Heart right ventricle (tissue), 16 donors: ENCODE measurements at regions of chr3 and their contacts with region 1.

Region 1: GRCh38 chr3:185558395-185558794 is 6.0 kb upstream of the LIPH start:
- DNase-seq: no peak
- ATAC-seq: no peak
- H3K4me3 ChIP-seq: no peak overlapping the region
- H3K27ac ChIP-seq: no peak overlapping the region
- H3K4me1 ChIP-seq: peaks cover 0 to 11% (median 0%) of the 10 kb centered on the region in 9 donors
- H3K27me3 ChIP-seq: peaks cover 0 to 29% (median 12%) of the 10 kb centered on the region in 7 donors
- CTCF ChIP-seq: no peak

Region 2: DNA sequence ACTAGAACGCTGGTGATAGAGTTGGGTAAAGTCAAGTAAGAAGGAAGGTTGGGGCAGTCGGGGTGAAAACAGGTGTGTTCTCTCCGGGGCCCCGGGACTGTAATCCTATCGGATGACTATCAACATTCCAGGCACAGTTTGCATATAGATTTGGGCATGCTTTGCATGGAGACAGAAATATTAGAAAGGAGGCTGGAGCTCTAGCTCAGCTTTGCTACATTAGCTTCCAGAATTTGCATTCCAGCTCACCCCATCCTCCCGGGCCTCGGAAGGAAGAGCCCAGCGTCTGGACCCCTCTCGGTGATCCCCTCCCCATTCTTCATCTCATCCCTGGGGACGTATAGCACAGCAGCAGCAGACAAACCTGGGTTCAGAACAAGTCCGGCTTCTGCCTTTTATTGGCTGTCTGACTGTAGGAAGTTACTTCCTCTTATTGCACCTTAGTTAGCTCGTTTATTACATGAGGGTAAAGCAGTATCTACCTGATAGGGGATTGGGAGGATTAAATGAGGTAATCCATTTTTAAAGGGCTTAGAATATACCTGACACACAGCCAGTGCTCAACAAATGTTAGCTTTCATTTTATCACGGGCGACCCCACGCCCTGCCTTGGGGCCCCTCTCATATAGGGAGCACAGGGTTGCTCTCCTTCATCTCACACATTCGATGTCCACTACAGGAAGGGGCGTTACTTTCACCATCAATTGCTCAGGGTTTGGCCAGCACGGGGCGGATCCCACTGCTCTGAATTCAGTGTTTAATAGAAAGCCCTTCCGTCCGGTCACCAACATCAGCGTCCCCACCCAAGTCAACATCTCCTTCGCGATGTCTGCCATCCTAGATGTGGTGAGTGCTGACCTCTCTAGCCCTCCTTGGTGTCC is 1458.3 kb before region 1 on chr3:
- intact Hi-C with region 1: no loop called
- DNase-seq: no peak
- ATAC-seq: no peak
- H3K4me3 ChIP-seq: no peak overlapping the region
- H3K27ac ChIP-seq: no peak overlapping the region
- H3K4me1 ChIP-seq: no peaks in the 10 kb centered on the region
- H3K27me3 ChIP-seq: peaks cover 0 to 5% (median 0%) of the 10 kb centered on the region in 7 donors
- CTCF ChIP-seq: no peak

Region 3: DNA sequence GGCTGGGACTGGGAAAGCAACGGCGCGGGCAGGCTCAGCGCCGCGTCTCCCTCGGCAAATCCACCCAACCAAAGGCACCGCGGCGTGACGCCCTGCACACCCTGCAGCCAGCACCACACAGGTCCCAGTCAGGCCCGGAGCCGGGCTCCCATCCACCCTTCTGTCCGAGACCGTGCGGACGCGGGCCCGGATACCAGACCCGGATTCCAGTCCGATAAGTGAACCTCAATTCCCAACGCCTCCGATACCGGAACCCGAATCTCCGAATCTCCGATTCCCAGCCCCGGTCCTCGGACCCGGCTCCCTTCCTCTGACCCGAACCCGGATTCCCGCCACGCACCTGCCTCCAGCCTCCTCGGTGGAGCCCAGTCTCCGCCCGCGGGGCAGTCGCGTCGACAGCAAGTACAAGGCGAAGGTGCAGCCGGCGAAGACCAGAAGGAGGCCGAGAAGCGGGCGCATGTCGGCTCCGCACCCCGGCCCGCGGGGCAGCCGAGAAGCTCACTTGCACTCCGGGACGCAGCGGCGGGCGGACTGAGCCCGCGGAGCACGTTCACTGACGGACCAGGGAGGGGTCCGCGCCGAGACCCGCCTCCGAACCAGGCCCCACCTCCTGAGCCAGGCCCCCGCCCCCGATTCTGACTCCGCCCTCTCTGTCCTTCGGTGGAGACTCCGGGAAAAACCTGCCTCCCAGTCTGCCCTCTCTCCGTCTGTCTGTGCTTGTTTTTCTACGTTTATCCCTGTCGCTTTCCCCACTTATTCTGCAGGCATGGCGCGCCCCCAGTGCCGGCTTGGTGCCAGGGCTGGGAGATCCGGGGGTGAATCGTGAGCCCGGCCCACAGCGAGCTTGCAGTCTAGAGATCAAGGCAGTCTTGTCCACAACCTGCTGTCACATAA is 59.6 kb before region 1 on chr3 and contains the start of gene TMEM41A:
- intact Hi-C with region 1: loop called in 4 of 10 experiments (anchors 5 to 10 kb)
- DNase-seq: peak; percentile 95
- ATAC-seq: peak; percentile 98 to 99 (median 99)
- H3K4me3 ChIP-seq: peak within 1 kb of the TSS; percentile 62 to 99 (median 86)
- H3K27ac ChIP-seq: peak within 1 kb of the TSS; percentile 30 to 92 (median 88)
- H3K4me1 ChIP-seq: peaks cover 6 to 37% (median 20%) of the 10 kb centered on the region in 9 donors
- H3K27me3 ChIP-seq: no peaks in the 10 kb centered on the region
- CTCF ChIP-seq: peak in 1 of 9 donors; percentile 8
- total RNA-seq, gene TMEM41A: 8.8 to 12.7 (median 11.5) TPM

Region 4: DNA sequence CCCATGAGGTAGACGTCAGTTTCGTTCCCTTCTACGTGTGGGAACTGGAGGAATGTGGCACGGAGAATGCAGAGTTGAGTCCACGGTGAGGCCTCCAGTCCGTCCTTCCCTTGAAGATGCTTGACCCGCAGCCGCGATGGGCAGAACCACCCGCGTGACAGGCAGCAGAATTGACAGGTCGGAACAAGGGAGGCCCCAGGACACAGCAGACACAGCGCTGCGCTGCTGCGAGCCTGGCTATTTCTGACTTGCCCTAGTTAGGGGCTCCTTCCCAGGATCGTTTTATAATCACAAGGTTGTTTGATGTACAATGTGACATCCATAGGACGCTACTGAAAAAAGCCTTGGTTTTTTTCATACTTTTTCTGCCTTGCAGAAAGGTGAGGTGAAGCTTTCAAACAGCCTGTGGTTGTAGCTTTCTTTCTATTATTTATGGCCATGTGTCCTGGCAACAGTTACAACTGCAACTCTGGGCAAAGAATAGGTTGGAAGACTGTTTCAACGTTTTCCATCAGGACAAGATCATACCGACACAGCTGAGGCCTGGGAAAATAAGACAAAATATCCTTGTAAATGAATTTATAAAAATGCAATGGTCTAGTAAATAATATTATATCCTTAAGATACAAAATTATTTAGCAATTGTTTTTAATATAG is 49.9 kb before region 1 on chr3:
- intact Hi-C with region 1: loop called in 2 of 10 experiments (anchors 5 to 10 kb)
- DNase-seq: peak; percentile 12 to 26
- ATAC-seq: peak in 7 of 8 donors; percentile 59 to 85 (median 67)
- H3K4me3 ChIP-seq: no peak overlapping the region
- H3K27ac ChIP-seq: peak overlapping the region in 1 of 10 donors; percentile 33
- H3K4me1 ChIP-seq: peaks cover 0 to 5% (median 0%) of the 10 kb centered on the region in 9 donors
- H3K27me3 ChIP-seq: no peaks in the 10 kb centered on the region
- CTCF ChIP-seq: no peak